A673 (cell line): ENCODE measurements at regions of chr1 and their contacts with region 1.

Region 1: DNA sequence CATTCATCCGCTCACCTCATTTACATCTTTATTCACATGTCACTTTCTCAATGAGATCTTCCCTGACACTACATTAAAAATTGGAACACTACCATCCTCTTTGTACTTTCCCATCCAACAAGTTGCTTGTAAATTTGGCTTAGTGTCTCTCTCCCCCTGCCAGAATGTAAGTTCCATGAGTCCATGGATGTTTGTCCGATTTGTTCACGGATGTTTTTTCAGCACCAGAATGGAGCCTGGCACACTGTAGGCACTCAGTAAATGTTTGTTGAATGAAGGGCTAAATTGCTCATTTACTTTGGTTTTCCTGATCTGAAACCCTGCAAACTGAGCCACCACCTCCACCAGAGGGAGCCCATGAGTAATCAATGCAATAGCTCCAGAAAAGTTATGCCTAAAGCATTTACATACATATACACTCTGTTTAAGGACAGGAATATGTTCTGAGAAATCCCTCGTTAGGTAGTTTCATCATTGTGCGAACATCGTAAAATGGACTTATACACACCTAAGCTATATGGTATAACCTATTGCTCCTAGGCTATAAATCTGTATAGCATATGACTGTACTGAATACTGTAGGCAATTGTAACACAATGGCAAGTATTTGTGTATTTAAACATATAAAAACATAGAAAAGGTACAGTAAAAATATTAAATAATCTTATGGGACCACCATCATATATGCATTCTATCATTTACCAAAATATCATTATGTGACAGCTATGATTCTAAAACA is 2.8 kb upstream of the EYA3 start:
- DNase-seq: peak; percentile 71
- H3K4me3 ChIP-seq: no peak overlapping the region
- H3K27ac ChIP-seq: no peak overlapping the region
- H3K4me1 ChIP-seq: peaks cover 12% of the 10 kb centered on the region
- H3K27me3 ChIP-seq: no peaks in the 10 kb centered on the region
- CTCF ChIP-seq: peak; percentile 84

Region 2: GRCh38 chr1:28208818-28209441 is 117.7 kb after region 1 on chr1:
- CTCF ChIA-PET with region 1: interaction called, 14 read pairs
- POLR2A ChIA-PET with region 1: no interaction called
- intact Hi-C with region 1: loop called (anchors 5 kb)
- DNase-seq: peak; percentile 60
- H3K4me3 ChIP-seq: no peak overlapping the region
- H3K27ac ChIP-seq: peak overlapping the region; percentile 7
- H3K4me1 ChIP-seq: no peaks in the 10 kb centered on the region
- H3K27me3 ChIP-seq: no peaks in the 10 kb centered on the region
- CTCF ChIP-seq: peak; percentile 63